B cell (primary cell): ENCODE measurements at regions of chr19 and their contacts with region 1.

Region 1: DNA sequence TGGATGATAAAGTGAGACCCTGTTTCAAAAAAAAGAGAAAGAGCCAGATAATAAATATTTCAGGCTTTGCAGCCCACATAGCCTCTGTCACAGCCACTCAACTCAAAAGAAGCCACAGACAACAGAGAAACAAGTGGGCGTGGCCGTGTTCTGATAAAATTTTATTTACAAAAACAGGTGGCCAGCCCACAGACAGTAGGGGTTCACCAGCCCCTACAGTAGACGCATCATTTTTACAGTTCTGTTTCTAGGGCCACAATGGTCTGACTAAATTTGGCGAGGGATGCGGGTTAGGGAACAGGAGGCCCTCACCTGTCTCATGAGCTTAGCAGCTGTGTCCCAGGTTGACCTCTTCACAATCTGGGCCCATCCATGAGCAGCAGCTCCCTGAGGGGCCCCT is 59.5 kb downstream of the ARHGEF18 start:
- DNase-seq: peak; percentile 26
- ATAC-seq: peak; percentile 50
- H3K4me3 ChIP-seq: no peak overlapping the region
- H3K4me3 Mint-ChIP-seq: peak overlapping the region; percentile 37
- H3K27ac ChIP-seq: peak overlapping the region in 1 of 2 donors; percentile 47
- H3K27ac Mint-ChIP-seq: peak overlapping the region; percentile 85
- H3K4me1 ChIP-seq: peaks cover 10 to 23% of the 10 kb centered on the region in 2 donors
- H3K4me1 Mint-ChIP-seq: peaks cover 28% of the 10 kb centered on the region
- H3K27me3 ChIP-seq: no peaks in the 10 kb centered on the region
- H3K27me3 Mint-ChIP-seq: no peaks in the 10 kb centered on the region
- CTCF ChIP-seq: no peak

Region 2: DNA sequence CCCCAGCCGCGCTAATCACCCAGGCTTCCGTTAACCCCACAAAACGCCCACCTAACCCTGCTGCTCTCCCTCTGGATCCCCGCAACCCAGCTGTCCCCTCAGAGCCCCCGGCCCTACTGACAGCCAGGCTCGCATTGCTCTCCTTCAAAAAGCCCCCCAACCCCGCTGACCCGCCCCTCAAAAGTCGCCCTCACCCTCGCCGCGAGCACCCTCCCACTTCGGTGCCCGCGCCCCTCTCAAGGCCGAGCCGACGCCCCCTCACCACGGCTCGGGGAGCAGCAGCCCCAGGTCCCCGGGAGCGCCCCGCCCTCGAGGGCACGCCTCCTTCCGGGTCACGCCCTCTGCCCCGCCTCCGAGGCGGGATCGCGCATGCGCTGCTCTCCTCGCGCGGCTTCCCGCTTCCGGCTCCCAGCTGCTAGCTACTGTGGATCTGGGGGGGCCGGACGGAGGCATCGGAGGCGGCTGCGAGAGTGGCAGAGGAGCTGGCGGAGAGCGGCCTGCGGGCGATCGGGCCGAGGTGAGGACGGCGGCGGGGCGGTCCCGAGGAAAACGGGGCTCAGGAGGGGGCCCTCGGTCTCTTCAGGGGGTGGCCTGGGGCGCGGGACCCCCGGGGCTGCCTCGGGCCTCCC is 13.4 kb before region 1 on chr19:
- CTCF ChIA-PET with region 1: interaction called, 10 read pairs
- POLR2A ChIA-PET with region 1: interaction called, 3 read pairs
- intact Hi-C with region 1: no loop called
- DNase-seq: peak; percentile 90
- ATAC-seq: peak; percentile 84
- H3K4me3 ChIP-seq: peak overlapping the region in 4 of 5 experiments; percentile 36 to 67 (median 60)
- H3K4me3 Mint-ChIP-seq: peak overlapping the region; percentile 91
- H3K27ac ChIP-seq: peak overlapping the region; percentile 30 to 82
- H3K27ac Mint-ChIP-seq: peak overlapping the region; percentile 84
- H3K4me1 ChIP-seq: peaks cover 40 to 44% of the 10 kb centered on the region in 2 donors
- H3K4me1 Mint-ChIP-seq: peaks cover 43% of the 10 kb centered on the region
- H3K27me3 ChIP-seq: no peaks in the 10 kb centered on the region
- H3K27me3 Mint-ChIP-seq: no peaks in the 10 kb centered on the region
- CTCF ChIP-seq: no peak

Region 3: GRCh38 chr19:7418596-7418995 is 10.3 kb after region 1 on chr19:
- CTCF ChIA-PET with region 1: no interaction called
- POLR2A ChIA-PET with region 1: no interaction called
- intact Hi-C with region 1: no loop called
- DNase-seq: no peak
- ATAC-seq: no peak
- H3K4me3 ChIP-seq: no peak overlapping the region
- H3K4me3 Mint-ChIP-seq: no peak overlapping the region
- H3K27ac ChIP-seq: no peak overlapping the region
- H3K27ac Mint-ChIP-seq: no peak overlapping the region
- H3K4me1 ChIP-seq: no peaks in the 10 kb centered on the region
- H3K4me1 Mint-ChIP-seq: peaks cover 14% of the 10 kb centered on the region
- H3K27me3 ChIP-seq: no peaks in the 10 kb centered on the region
- H3K27me3 Mint-ChIP-seq: no peaks in the 10 kb centered on the region
- CTCF ChIP-seq: no peak